Posterior cingulate gyrus (tissue), 11 donors: ENCODE measurements at regions of chr13 and their contacts with region 1.

Region 1: GRCh38 chr13:25001476-25002206 is 94.3 kb upstream of the PABPC3 start:
- DNase-seq: no peak

Region 2: DNA sequence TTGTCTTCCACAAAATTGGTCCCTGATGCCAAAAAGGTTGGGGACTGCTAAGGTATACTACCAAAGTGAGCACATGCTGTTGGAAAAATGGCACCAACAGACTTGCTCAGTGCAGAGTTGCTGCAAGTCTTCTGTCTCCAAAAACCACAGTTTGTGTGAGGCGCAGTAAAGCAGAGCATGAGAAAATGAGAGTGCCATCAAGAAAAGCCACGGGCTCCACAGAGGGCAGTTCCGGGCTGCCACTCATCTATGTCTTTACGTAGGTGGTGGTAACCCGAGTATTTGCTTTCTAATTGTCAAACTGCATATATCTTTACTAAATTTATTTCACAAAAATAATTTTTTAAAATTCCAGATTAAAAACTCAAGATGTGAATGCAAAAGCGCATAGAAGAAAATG is 113.9 kb before region 1 on chr13:
- intact Hi-C with region 1: no loop called
- DNase-seq: no peak

Region 3: GRCh38 chr13:25037057-25037813 is 35.6 kb after region 1 on chr13:
- intact Hi-C with region 1: loop called (anchors 1 kb)
- DNase-seq: peak in 7 of 10 donors; percentile 34 to 93 (median 55)

Region 4: DNA sequence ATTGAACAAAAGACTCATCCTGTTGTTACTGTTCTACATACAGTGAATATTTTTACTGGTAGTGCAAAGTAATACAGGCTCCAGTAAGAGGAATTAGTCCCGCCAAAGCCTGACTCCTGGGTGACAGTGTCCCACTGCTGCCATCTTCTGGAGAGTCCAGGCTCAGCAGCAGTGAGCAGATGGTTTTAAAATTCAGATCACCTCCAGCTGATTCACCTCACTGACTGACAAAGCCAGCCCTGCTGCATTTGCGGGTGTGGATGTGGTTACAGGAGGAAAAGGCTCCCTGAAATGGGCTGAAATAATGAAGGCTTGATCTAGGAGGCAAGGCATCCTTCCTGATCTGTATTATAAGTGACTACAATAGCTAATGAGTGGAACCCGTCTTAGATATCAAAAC is 112.6 kb after region 1 on chr13:
- intact Hi-C with region 1: loop called (anchors 5 kb)
- DNase-seq: peak; percentile 72 to 97 (median 86)

Region 5: GRCh38 chr13:25733001-25733491 is 731.4 kb after region 1 on chr13:
- intact Hi-C with region 1: no loop called
- DNase-seq: no peak

Region 6: GRCh38 chr13:25806264-25806974 is 804.8 kb after region 1 on chr13:
- intact Hi-C with region 1: no loop called
- DNase-seq: no peak